OCI-LY7 (cell line): ENCODE measurements at regions of chr6 and their contacts with region 1.

Region 1: GRCh38 chr6:113858480-113859348 is 1.6 kb downstream of the MARCKS start:
- DNase-seq: peak; percentile 75
- H3K4me3 ChIP-seq: peak overlapping the region; percentile 65
- H3K27ac ChIP-seq: no peak overlapping the region
- H3K4me1 ChIP-seq: peaks cover 30% of the 10 kb centered on the region
- CTCF ChIP-seq: peak; percentile 87

Region 2: DNA sequence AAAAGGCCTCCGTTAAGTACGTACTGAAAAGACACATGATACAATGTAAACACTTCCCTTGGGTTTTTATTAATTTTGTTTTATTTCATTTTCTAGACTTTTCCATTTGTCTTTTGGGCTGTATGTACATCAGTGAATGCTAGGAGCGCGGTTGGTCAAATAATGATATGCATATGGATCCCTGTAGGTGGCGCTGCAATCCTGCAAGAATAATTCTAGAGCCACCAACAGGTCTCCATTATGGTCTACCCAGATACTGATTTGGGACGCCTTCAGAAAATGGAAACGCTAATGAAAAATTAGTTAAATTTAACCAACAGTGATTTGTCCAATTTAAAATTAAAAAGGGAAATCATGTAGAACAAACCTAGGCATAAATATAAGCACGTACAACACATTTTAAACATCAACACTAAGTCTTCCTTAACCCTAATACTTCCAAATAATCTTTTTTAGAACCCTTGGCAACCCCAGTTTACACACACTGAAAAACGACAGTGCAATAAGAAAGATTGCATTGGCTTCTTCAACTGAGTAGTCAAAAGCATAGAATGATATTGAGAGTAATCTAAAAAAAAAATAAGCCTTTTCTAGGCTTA is 1078.1 kb before region 1 on chr6:
- CTCF ChIA-PET with region 1: no interaction called
- POLR2A ChIA-PET with region 1: no interaction called
- intact Hi-C with region 1: loop called (anchors 1 kb)
- DNase-seq: peak; percentile 63
- H3K4me3 ChIP-seq: no peak overlapping the region
- H3K27ac ChIP-seq: no peak overlapping the region
- H3K4me1 ChIP-seq: no peaks in the 10 kb centered on the region
- CTCF ChIP-seq: peak; percentile 92

Region 3: GRCh38 chr6:112879920-112880413 is 978.7 kb before region 1 on chr6:
- CTCF ChIA-PET with region 1: no interaction called
- POLR2A ChIA-PET with region 1: no interaction called
- intact Hi-C with region 1: loop called (anchors 10 kb)
- DNase-seq: peak; percentile 55
- H3K4me3 ChIP-seq: peak overlapping the region; percentile 31
- H3K27ac ChIP-seq: no peak overlapping the region
- H3K4me1 ChIP-seq: no peaks in the 10 kb centered on the region
- CTCF ChIP-seq: peak; percentile 70

Region 4: GRCh38 chr6:113306552-113307145 is 552.1 kb before region 1 on chr6:
- CTCF ChIA-PET with region 1: no interaction called
- POLR2A ChIA-PET with region 1: no interaction called
- intact Hi-C with region 1: loop called (anchors 1 kb)
- DNase-seq: peak; percentile 43
- H3K4me3 ChIP-seq: no peak overlapping the region
- H3K27ac ChIP-seq: no peak overlapping the region
- H3K4me1 ChIP-seq: no peaks in the 10 kb centered on the region
- CTCF ChIP-seq: peak; percentile 75

Region 5: GRCh38 chr6:113805173-113805790 is 53.4 kb before region 1 on chr6:
- CTCF ChIA-PET with region 1: no interaction called
- POLR2A ChIA-PET with region 1: interaction called, 3 read pairs
- intact Hi-C with region 1: loop called (anchors 5 kb)
- DNase-seq: peak; percentile 2
- H3K4me3 ChIP-seq: no peak overlapping the region
- H3K27ac ChIP-seq: no peak overlapping the region
- H3K4me1 ChIP-seq: peaks cover 25% of the 10 kb centered on the region
- CTCF ChIP-seq: no peak